ENCODE measurements at regions of chr19 and their contacts with region 1.

Region 1: GRCh38 chr19:14383661-14384555 is 2.7 kb downstream of the ADGRE5 start:
- DNase-seq: peak in 4 of 10 donors; percentile 50 to 80 (median 76)
- ATAC-seq: peak in 1 of 2 donors; percentile 11
- H3K4me3 Mint-ChIP-seq: peak overlapping the region; percentile 84 to 99 (median 94)
- H3K27ac Mint-ChIP-seq: peak overlapping the region; percentile 94 to 100 (median 98)
- H3K4me1 Mint-ChIP-seq: peaks cover 30 to 63% (median 50%) of the 10 kb centered on the region in 4 donors
- H3K27me3 Mint-ChIP-seq: no peaks in the 10 kb centered on the region

Region 2: GRCh38 chr19:14337510-14337909 is 46.4 kb before region 1 on chr19:
- POLR2A ChIA-PET with region 1: no interaction called
- DNase-seq: peak in 8 of 10 donors; percentile 7 to 45 (median 28)
- ATAC-seq: peak in 1 of 2 donors; percentile 60
- H3K4me3 Mint-ChIP-seq: no peak overlapping the region
- H3K27ac Mint-ChIP-seq: no peak overlapping the region
- H3K4me1 Mint-ChIP-seq: peaks cover 4 to 9% (median 7%) of the 10 kb centered on the region in 4 donors
- H3K27me3 Mint-ChIP-seq: no peaks in the 10 kb centered on the region

Region 3: GRCh38 chr19:14354445-14354844 is 29.5 kb before region 1 on chr19:
- POLR2A ChIA-PET with region 1: interaction called, 33 read pairs
- DNase-seq: no peak
- ATAC-seq: no peak
- H3K4me3 Mint-ChIP-seq: no peak overlapping the region
- H3K27ac Mint-ChIP-seq: peak overlapping the region in 4 of 10 donors; percentile 24 to 99 (median 82)
- H3K4me1 Mint-ChIP-seq: peaks cover 12 to 41% (median 30%) of the 10 kb centered on the region in 4 donors
- H3K27me3 Mint-ChIP-seq: no peaks in the 10 kb centered on the region

Region 4: GRCh38 chr19:14366498-14366915 is 17.4 kb before region 1 on chr19:
- POLR2A ChIA-PET with region 1: interaction called, 360 read pairs
- DNase-seq: peak; percentile 84 to 97 (median 94)
- ATAC-seq: peak; percentile 56 to 60
- H3K4me3 Mint-ChIP-seq: peak overlapping the region; percentile 53 to 89 (median 74)
- H3K27ac Mint-ChIP-seq: peak overlapping the region; percentile 89 to 100 (median 100)
- H3K4me1 Mint-ChIP-seq: peaks cover 37 to 85% (median 74%) of the 10 kb centered on the region in 4 donors
- H3K27me3 Mint-ChIP-seq: no peaks in the 10 kb centered on the region

Region 5: DNA sequence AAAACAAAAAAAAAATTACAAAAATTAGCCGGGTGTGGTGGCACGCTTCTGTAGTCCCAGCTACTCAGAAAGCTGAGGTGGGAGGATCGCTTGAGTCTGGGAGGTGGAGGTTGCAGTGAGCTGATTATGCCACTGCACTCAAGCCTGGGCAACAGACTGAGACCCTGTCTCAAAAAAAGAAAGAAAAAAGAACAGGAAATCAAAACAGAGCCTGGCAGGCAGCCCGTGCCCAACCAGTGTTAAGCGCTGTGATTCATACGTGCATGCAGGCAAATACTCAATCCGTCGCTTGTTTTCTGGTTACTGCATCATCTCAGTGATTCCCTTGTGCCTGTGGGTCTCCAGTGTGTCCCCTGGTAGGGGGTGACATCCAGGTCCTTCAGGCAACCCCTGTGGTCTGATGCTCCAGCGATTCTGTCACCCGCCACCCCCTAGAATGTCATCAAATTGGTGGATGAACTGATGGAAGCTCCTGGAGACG is 17.1 kb after region 1 on chr19:
- POLR2A ChIA-PET with region 1: interaction called, 100 read pairs
- DNase-seq: peak in 4 of 10 donors; percentile 19 to 63 (median 26)
- ATAC-seq: peak; percentile 7 to 8
- H3K4me3 Mint-ChIP-seq: peak overlapping the region in 3 of 10 donors; percentile 10 to 49 (median 29)
- H3K27ac Mint-ChIP-seq: peak overlapping the region in 9 of 10 donors; percentile 20 to 87 (median 75)
- H3K4me1 Mint-ChIP-seq: peaks cover 11 to 24% (median 14%) of the 10 kb centered on the region in 4 donors
- H3K27me3 Mint-ChIP-seq: no peaks in the 10 kb centered on the region

Region 6: DNA sequence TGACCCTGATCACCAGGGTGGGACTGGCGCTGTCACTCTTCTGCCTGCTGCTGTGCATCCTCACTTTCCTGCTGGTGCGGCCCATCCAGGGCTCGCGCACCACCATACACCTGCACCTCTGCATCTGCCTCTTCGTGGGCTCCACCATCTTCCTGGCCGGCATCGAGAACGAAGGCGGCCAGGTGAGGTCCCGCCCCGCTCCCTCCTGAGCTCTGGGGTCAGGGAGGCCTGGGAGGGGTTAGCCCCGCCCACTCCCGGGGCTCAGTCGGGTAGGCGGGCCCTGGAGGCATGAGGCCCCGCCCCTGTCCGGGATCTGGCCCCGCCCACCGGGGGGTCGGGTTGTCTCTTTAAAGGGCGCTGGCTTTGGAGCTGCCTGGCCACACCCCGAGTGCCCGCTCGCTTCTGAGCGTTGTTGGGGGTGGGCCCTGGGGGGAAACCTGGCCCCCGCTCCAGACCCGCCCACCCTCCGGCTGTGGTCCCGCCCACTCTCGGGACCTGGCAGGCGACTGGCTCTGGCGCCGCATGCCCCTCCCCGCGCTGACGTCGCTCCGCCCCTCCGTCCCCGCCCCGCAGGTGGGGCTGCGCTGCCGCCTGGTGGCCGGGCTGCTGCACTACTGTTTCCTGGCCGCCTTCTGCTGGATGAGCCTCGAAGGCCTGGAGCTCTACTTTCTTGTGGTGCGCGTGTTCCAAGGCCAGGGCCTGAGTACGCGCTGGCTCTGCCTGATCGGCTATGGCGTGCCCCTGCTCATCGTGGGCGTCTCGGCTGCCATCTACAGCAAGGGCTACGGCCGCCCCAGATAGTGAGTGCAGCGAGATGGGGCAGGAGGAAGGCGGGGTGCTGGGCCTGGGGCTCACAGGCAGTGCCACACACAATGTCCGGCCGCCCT is 22.1 kb after region 1 on chr19:
- POLR2A ChIA-PET with region 1: interaction called, 100 read pairs
- DNase-seq: peak; percentile 83 to 94 (median 91)
- ATAC-seq: peak; percentile 57 to 79
- H3K4me3 Mint-ChIP-seq: peak overlapping the region in 3 of 10 donors; percentile 29 to 43 (median 30)
- H3K27ac Mint-ChIP-seq: peak overlapping the region; percentile 57 to 92 (median 78)
- H3K4me1 Mint-ChIP-seq: peaks cover 12 to 37% (median 28%) of the 10 kb centered on the region in 4 donors
- H3K27me3 Mint-ChIP-seq: no peaks in the 10 kb centered on the region

Region 7: DNA sequence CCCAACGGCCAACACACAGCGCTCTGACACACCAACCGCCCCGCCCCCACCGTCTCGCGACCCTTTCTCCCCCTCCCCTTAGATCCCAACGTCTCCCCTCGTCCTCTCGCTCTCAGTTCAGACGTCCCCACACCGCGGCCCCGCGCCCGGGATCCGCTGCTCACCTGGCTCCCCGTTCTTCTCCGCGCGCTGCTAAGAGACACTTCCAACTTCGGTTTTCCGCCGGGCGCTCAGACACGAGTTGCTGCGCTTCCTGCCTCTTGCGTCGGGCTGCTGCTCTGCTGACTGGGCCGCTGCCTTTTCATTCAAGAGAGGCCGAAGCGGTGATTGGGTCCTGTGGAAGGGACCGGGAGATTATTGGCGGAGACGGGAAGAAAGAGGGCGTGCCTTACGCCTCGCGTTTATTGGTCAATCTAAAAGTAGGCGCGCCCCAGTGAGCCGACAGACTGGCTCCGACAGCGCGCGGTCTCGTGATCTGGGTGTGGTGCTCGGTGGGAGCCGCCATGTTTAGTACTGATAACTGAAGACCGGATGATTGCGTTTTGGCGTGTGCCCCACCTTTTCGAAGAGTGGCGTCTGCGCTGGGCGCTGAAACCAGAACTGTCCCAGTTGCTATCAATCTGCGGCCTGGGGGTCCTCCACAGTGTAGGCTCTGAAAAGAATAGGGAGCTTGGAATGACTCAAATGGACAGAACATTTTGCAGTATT is 35.4 kb after region 1 on chr19 and contains the start of gene DDX39A:
- POLR2A ChIA-PET with region 1: interaction called, 12 read pairs
- DNase-seq: peak; percentile 85 to 99 (median 98)
- ATAC-seq: peak; percentile 87 to 88
- H3K4me3 Mint-ChIP-seq: peak within 1 kb of the TSS; percentile 91 to 100 (median 97)
- H3K27ac Mint-ChIP-seq: peak within 1 kb of the TSS; percentile 95 to 100 (median 98)
- H3K4me1 Mint-ChIP-seq: peaks cover 21 to 41% (median 40%) of the 10 kb centered on the region in 4 donors
- H3K27me3 Mint-ChIP-seq: no peaks in the 10 kb centered on the region
- polyA plus RNA-seq, gene DDX39A: 96.0 to 136 (median 106) TPM